A673 (cell line): ENCODE measurements at regions of chr15 and their contacts with region 1.

Region 1: GRCh38 chr15:69523010-69524001 is 70.7 kb downstream of the RPLP1 start:
- DNase-seq: peak; percentile 86
- H3K4me3 ChIP-seq: no peak overlapping the region
- H3K27ac ChIP-seq: no peak overlapping the region
- H3K4me1 ChIP-seq: no peaks in the 10 kb centered on the region
- H3K27me3 ChIP-seq: peaks cover 3% of the 10 kb centered on the region
- CTCF ChIP-seq: peak; percentile 89

Region 2: GRCh38 chr15:69562564-69562963 is 39.3 kb after region 1 on chr15:
- CTCF ChIA-PET with region 1: interaction called, 17 read pairs
- POLR2A ChIA-PET with region 1: no interaction called
- intact Hi-C with region 1: no loop called
- DNase-seq: no peak
- H3K4me3 ChIP-seq: no peak overlapping the region
- H3K27ac ChIP-seq: no peak overlapping the region
- H3K4me1 ChIP-seq: peaks cover 4% of the 10 kb centered on the region
- H3K27me3 ChIP-seq: no peaks in the 10 kb centered on the region
- CTCF ChIP-seq: no peak

Region 3: GRCh38 chr15:69631978-69632377 is 108.7 kb after region 1 on chr15:
- CTCF ChIA-PET with region 1: no interaction called
- POLR2A ChIA-PET with region 1: no interaction called
- intact Hi-C with region 1: no loop called
- DNase-seq: no peak
- H3K4me3 ChIP-seq: no peak overlapping the region
- H3K27ac ChIP-seq: no peak overlapping the region
- H3K4me1 ChIP-seq: no peaks in the 10 kb centered on the region
- H3K27me3 ChIP-seq: peaks cover 60% of the 10 kb centered on the region
- CTCF ChIP-seq: no peak

Region 4: GRCh38 chr15:69729161-69729748 is 205.9 kb after region 1 on chr15:
- CTCF ChIA-PET with region 1: no interaction called
- POLR2A ChIA-PET with region 1: no interaction called
- intact Hi-C with region 1: loop called (anchors 5 kb)
- DNase-seq: peak; percentile 51
- H3K4me3 ChIP-seq: no peak overlapping the region
- H3K27ac ChIP-seq: no peak overlapping the region
- H3K4me1 ChIP-seq: peaks cover 6% of the 10 kb centered on the region
- H3K27me3 ChIP-seq: no peaks in the 10 kb centered on the region
- CTCF ChIP-seq: peak; percentile 91